ENCODE measurements at regions of chr20 and their contacts with region 1.

Region 1: DNA sequence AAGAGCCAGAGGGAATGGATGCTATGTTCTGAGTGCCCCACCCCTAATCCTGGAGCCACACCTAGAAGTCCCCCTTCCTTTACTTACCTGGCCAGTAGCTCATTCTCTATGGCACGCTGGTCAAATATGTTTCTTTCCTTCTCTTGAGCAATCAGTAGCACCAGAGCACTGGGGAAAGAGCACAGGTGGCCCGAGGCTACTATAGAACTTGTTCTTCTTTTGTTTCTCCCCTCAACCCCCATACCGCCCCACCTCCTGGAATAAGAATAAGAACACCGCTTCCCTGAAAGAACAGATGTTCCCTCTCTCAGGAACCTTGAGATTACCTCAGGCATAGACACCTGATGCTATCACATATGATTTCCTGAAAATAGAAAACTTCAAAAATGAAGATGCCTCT is 18.8 kb downstream of the GSS start:
- DNase-seq: peak; percentile 36
- H3K4me3 Mint-ChIP-seq: no peak overlapping the region
- H3K27ac Mint-ChIP-seq: no peak overlapping the region
- H3K4me1 Mint-ChIP-seq: no peaks in the 10 kb centered on the region
- H3K27me3 Mint-ChIP-seq: no peaks in the 10 kb centered on the region
- CTCF ChIP-seq: no peak

Region 2: GRCh38 chr20:34350095-34350494 is 586.8 kb before region 1 on chr20:
- CTCF ChIA-PET with region 1: no interaction called
- POLR2A ChIA-PET with region 1: no interaction called
- intact Hi-C with region 1: no loop called
- DNase-seq: no peak
- H3K4me3 Mint-ChIP-seq: no peak overlapping the region
- H3K27ac Mint-ChIP-seq: no peak overlapping the region
- H3K4me1 Mint-ChIP-seq: no peaks in the 10 kb centered on the region
- H3K27me3 Mint-ChIP-seq: no peaks in the 10 kb centered on the region
- CTCF ChIP-seq: no peak

Region 3: DNA sequence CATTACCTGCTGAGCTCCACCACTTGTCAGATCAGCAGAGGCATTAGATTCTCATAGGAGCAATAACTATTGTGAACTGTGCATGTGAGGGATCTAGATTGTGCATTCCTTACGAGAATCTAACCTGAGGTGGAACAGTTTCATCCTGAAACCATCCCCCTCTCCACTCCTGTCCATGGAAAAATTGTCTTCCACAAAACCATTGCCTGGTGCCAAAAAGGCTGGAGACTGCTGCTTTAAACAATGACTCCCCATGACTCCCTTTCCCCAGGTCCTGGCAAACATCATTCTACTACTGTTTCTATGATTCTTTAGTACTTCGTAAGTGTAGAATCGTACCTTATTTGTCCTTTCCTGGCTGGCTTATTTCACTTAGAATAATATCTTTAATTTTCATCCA is 430.4 kb before region 1 on chr20:
- CTCF ChIA-PET with region 1: no interaction called
- POLR2A ChIA-PET with region 1: no interaction called
- intact Hi-C with region 1: no loop called
- DNase-seq: no peak
- H3K4me3 Mint-ChIP-seq: no peak overlapping the region
- H3K27ac Mint-ChIP-seq: no peak overlapping the region
- H3K4me1 Mint-ChIP-seq: no peaks in the 10 kb centered on the region
- H3K27me3 Mint-ChIP-seq: no peaks in the 10 kb centered on the region
- CTCF ChIP-seq: no peak

Region 4: GRCh38 chr20:34904202-34904621 is 32.6 kb before region 1 on chr20:
- CTCF ChIA-PET with region 1: no interaction called
- POLR2A ChIA-PET with region 1: no interaction called
- intact Hi-C with region 1: no loop called
- DNase-seq: no peak
- H3K4me3 Mint-ChIP-seq: no peak overlapping the region
- H3K27ac Mint-ChIP-seq: no peak overlapping the region
- H3K4me1 Mint-ChIP-seq: peaks cover 30% of the 10 kb centered on the region
- H3K27me3 Mint-ChIP-seq: no peaks in the 10 kb centered on the region
- CTCF ChIP-seq: no peak

Region 5: DNA sequence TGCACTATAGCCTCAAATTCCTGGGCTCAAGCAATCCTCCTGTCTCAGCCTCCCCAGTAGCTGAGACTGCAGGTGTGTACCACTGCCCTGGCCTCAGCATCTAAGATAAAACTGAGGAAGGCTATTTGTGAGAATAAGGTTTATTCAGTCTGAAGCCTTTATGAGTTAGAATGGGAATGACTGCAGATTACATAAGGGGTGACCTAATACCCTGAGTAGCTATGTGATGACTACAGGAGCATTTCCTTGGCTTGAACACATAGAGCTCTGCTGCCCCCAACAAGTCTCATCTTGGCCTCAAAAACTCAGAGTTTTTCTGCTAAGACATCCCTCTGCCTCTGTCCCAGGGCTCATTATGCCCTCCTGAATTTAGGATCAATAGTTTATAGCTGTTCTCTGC is 11.2 kb after region 1 on chr20:
- CTCF ChIA-PET with region 1: interaction called, 7 read pairs
- POLR2A ChIA-PET with region 1: interaction called, 20 read pairs
- intact Hi-C with region 1: no loop called
- DNase-seq: peak; percentile 27
- H3K4me3 Mint-ChIP-seq: no peak overlapping the region
- H3K27ac Mint-ChIP-seq: no peak overlapping the region
- H3K4me1 Mint-ChIP-seq: peaks cover 31% of the 10 kb centered on the region
- H3K27me3 Mint-ChIP-seq: no peaks in the 10 kb centered on the region
- CTCF ChIP-seq: no peak

Measured in MCF 10A (cell line).